ENCODE measurements at regions of chr18 and their contacts with region 1.

Region 1: DNA sequence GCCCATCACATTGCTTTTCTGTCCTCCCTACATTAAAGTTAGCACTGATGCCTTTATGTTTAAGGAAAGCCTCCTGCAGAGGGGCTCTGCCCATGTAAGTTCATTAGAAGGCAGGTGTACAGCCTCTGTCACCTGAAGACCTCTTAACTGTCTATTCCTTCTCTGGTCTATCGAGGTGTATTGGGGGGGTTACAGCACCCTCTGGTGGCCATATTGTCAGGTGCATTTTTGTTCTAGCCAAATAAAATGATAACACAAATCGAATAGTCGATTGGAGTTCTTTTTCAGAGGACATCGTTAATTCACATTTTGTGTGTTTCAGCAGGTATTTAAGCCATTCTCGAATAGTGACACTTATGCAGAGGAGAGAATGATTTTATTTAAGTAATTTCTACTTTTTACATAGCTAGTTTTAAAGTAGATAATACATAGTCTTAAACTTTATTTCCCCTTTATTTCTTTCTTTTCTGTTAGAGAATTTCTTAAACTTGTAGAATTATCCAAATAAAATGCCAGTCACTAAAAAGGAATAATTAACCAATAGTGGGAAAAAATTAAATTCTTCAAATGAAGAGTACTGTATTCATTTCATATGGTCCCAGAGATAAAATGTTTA is 136.8 kb downstream of the NEDD4L start:
- DNase-seq: no peak
- H3K4me3 ChIP-seq: no peak overlapping the region
- CTCF ChIP-seq: peak; percentile 68

Region 2: GRCh38 chr18:56921896-56922480 is 1258.9 kb before region 1 on chr18:
- CTCF ChIA-PET with region 1: no interaction called
- POLR2A ChIA-PET with region 1: no interaction called
- DNase-seq: no peak
- H3K4me3 ChIP-seq: no peak overlapping the region
- CTCF ChIP-seq: no peak

Region 3: DNA sequence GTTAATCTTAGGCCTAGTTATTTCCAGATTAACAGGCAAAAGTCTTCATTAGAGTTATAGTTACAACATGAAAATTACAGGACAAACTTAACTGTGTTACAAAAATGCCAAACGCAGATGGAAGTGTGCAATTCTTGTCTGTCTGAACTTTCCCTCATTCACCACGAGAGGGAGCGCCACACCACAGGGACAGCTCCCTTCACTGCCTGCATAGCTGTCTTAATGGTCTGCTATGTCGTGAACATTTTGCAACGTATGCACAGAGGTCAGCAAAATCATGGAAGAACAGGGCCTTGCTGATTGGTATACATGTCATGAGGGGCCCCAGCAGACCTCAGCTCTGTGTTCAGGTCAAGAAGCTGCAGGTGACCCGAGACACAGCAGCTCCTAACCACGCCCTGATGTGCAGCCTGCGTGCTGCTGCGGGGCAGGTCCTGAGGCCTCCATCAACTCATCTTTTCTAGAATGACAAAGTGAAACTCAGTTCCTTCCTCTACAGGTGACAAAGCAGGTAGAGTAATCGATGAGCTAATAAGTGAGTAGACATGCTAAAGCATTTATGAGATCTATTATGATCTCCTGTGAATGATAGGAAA is 298.9 kb before region 1 on chr18:
- CTCF ChIA-PET with region 1: interaction called, 10 read pairs
- POLR2A ChIA-PET with region 1: no interaction called
- DNase-seq: peak; percentile 38
- H3K4me3 ChIP-seq: no peak overlapping the region
- CTCF ChIP-seq: peak; percentile 95

Region 4: DNA sequence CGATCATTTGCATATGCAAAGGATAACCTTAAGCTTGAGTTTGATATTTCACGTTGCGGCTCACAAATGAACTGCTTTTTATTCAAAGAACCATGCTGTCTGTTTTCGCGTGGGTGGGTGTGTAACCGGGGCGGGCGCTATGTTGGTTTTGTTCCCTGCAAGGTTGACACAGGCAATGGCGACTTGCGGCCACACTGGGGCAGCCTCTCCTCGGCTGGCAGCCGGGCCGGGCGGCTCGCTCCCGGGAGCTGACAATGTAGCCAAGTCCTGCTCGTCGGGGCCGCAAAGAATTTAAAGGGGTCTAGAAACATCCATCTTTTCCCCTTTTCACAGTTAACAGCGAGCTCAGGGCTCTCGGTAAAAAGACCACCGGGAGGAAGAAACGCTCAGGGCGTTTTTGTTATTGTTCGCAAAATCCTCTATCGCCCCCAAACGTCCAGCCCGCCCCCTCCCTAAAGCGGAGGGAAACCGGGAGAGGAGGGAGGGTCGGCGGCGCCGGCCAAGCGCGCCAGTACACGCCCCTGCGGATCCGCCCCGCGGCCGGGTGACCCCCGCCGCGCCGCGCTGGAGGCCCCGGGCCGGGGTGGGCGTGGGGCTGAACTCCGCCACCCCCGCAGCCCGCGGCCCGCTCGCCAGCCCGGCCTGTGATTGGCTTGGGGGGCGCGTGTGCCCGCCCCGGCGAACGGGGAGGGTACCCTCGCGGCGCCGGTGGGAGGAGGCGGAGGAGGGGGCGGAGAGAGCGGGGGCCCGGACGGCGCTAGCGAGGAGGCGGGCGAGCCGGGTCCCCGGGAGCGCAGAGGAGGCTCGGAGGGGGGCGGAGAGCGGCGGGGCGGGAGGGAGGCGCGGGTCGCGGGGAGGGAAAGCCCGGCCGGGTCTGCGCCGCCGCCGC is 137.1 kb before region 1 on chr18 and contains the start of gene NEDD4L:
- CTCF ChIA-PET with region 1: interaction called, 25 read pairs
- POLR2A ChIA-PET with region 1: interaction called, 3 read pairs
- DNase-seq: no peak
- H3K4me3 ChIP-seq: peak within 1 kb of the TSS; percentile 73
- CTCF ChIP-seq: peak; percentile 93

Region 5: GRCh38 chr18:58161659-58162058 is 19.2 kb before region 1 on chr18:
- CTCF ChIA-PET with region 1: interaction called, 20 read pairs
- POLR2A ChIA-PET with region 1: no interaction called
- DNase-seq: no peak
- H3K4me3 ChIP-seq: no peak overlapping the region
- CTCF ChIP-seq: no peak

Region 6: DNA sequence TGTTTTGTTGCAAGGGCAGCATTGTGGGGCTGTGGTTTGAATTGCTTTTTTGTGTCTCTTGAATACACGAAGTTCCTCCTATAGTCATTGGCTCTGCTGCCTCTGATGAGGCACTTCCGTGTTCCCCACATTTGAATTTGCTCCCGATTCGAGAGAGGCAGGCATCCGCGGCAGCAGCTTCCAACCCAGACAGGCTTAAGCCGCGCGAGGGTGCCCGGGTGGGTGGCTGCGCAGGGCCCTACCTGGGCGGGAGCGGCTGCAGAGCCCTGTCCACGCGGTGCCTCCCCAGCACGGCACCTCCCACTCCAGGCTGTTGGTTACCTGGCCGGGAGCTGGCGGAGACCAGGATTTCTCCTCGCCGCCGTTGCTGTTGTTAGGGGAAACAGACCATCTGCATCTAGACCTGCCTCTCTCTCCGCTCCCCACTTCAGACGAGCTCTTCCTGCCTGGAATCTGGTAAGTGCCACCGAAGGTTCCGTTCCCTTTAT is 14.5 kb after region 1 on chr18:
- CTCF ChIA-PET with region 1: interaction called, 122 read pairs
- POLR2A ChIA-PET with region 1: no interaction called
- DNase-seq: no peak
- H3K4me3 ChIP-seq: peak overlapping the region; percentile 46
- CTCF ChIP-seq: no peak

Region 7: GRCh38 chr18:58202406-58202730 is 21.5 kb after region 1 on chr18:
- CTCF ChIA-PET with region 1: interaction called, 122 read pairs
- POLR2A ChIA-PET with region 1: no interaction called
- DNase-seq: no peak
- H3K4me3 ChIP-seq: no peak overlapping the region
- CTCF ChIP-seq: no peak

Region 8: DNA sequence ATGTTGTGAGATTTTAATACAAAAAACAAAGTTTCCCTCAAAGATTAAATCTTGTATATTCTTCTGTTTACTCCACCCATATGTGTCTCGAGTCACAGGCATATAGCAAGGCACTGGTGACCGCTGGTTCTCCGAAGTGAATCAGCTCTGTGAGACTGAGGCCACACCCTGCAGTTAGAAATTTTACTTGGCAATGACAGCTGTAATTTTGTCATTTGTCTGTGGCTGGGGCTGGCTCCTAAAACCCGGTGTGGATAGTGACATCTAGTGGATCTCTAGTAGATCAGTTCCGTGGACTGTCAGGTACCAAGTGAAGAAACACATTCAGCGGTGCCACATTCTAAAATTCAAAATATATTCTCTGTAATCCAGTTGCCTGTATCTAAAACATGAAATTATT is 141.1 kb after region 1 on chr18:
- CTCF ChIA-PET with region 1: interaction called, 13 read pairs
- POLR2A ChIA-PET with region 1: no interaction called
- DNase-seq: no peak
- H3K4me3 ChIP-seq: no peak overlapping the region
- CTCF ChIP-seq: peak; percentile 50

Measured in AG04449 (cell line).